ENCODE measurements at regions of chr5 and their contacts with region 1.

Region 1: DNA sequence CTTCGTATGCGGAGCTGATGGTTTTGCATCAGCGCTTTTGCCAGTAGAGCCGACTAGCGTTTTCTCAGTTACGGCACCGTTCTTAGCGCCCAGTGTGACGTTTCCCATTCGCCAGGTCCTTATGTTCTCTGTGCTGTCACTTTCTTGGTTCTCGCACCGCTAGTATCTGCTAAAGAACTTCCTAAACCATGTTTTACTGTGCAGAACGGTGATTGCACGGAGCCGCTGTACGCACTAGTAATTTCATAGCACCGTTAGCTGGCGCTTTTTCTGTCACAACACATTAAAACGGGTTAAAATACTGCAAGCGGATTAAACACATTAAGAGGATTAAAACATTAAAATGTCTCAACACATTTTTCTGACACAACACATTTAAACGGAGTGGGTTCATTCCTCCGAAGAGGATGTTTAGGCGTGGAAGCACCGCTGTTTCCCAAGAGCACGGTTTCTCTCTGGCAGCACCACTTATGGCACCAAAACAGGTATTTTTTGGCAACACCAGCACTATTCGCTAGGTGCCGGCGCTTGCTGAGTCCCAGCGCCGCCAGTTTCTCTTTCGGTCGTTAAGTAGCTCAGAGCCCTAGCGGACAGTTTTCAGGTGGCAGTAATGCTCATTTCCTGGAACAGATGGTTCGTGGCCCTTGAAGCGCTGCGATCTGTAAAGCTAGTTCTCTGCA is 20.4 kb downstream of the ANXA2R start:
- DNase-seq: peak; percentile 65 to 95 (median 86)
- ATAC-seq: peak; percentile 67 to 74 (median 70)
- H3K4me3 ChIP-seq: peak overlapping the region; percentile 70 to 92
- H3K4me3 Mint-ChIP-seq: peak overlapping the region; percentile 90 to 98 (median 98)
- H3K27ac ChIP-seq: peak overlapping the region; percentile 98
- H3K27ac Mint-ChIP-seq: peak overlapping the region; percentile 98 to 100
- H3K4me1 ChIP-seq: peaks cover 31 to 35% of the 10 kb centered on the region in 2 experiments
- H3K4me1 Mint-ChIP-seq: peaks cover 41 to 46% (median 42%) of the 10 kb centered on the region in 3 donors
- H3K27me3 ChIP-seq: no peaks in the 10 kb centered on the region
- H3K27me3 Mint-ChIP-seq: no peaks in the 10 kb centered on the region

Region 2: DNA sequence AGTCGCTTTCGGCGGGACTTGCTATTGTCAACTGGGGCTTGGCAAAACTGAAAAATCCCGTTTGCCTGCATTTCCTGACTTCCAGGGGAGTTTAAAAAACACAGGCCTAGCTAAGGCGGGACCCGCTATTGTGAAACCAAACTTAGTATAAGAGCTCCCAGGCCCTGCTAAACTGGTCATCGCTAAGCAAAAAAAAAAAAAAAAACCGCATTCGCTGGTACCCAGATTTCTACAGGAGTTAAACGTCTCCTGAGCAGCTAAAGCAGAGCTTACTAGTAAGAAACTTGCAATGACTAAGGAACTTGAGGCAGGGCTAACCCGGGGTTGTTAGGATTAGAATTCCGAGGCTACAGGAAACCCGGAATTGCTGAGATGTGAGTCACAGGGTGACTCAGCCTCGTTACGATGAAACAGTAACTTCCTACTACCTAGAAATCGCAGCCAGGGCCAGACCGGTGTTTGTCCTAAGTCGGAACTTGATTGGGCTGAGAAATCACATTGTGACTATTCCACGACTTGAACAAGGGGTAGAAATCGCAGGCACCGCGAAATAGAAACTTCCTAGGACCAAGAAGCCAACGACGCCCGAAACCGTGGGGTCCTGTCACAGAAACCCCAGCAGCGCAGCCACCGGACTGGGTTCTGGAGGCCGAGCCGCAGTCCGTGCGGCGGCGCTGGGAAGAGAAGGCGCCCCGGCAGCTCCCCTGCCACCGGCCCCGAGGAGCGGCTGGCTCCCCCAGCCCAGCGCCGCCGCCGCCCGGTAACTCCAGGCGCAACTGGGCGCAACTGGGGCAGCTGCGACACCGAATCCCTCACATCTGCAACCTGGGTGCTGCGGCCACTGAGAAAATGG is 69.1 kb before region 1 on chr5:
- CTCF ChIA-PET with region 1: interaction called, 3 to 16 read pairs
- POLR2A ChIA-PET with region 1: interaction called, 3 to 47 read pairs
- DNase-seq: peak; percentile 17 to 80 (median 41)
- ATAC-seq: peak; percentile 17 to 58 (median 44)
- H3K4me3 ChIP-seq: peak overlapping the region; percentile 77 to 98
- H3K4me3 Mint-ChIP-seq: peak overlapping the region; percentile 96 to 98 (median 98)
- H3K27ac ChIP-seq: peak overlapping the region; percentile 99
- H3K27ac Mint-ChIP-seq: peak overlapping the region; percentile 100
- H3K4me1 ChIP-seq: peaks cover 15 to 46% of the 10 kb centered on the region in 2 experiments
- H3K4me1 Mint-ChIP-seq: peaks cover 34 to 45% (median 40%) of the 10 kb centered on the region in 3 donors
- H3K27me3 ChIP-seq: no peaks in the 10 kb centered on the region
- H3K27me3 Mint-ChIP-seq: no peaks in the 10 kb centered on the region

Region 3: GRCh38 chr5:42989190-42989589 is 30.6 kb before region 1 on chr5:
- CTCF ChIA-PET with region 1: interaction called, 5 to 146 read pairs
- POLR2A ChIA-PET with region 1: interaction called, 31 to 122 read pairs
- DNase-seq: peak in 1 of 35 experiments; percentile 46
- ATAC-seq: no peak
- H3K4me3 ChIP-seq: peak overlapping the region in 1 of 2 donors; percentile 83
- H3K4me3 Mint-ChIP-seq: peak overlapping the region; percentile 83 to 100 (median 100)
- H3K27ac ChIP-seq: peak overlapping the region; percentile 89
- H3K27ac Mint-ChIP-seq: peak overlapping the region; percentile 90 to 100
- H3K4me1 ChIP-seq: peaks cover 25 to 39% of the 10 kb centered on the region in 2 experiments
- H3K4me1 Mint-ChIP-seq: peaks cover 59 to 76% (median 65%) of the 10 kb centered on the region in 3 donors
- H3K27me3 ChIP-seq: no peaks in the 10 kb centered on the region
- H3K27me3 Mint-ChIP-seq: no peaks in the 10 kb centered on the region

Region 4: GRCh38 chr5:42994246-42995151 is 25.3 kb before region 1 on chr5:
- CTCF ChIA-PET with region 1: interaction called, 5 to 146 read pairs
- POLR2A ChIA-PET with region 1: interaction called, 31 to 122 read pairs
- DNase-seq: peak; percentile 73 to 91 (median 82)
- ATAC-seq: peak; percentile 62 to 72 (median 66)
- H3K4me3 ChIP-seq: peak overlapping the region; percentile 83 to 95
- H3K4me3 Mint-ChIP-seq: peak overlapping the region; percentile 99 to 100 (median 100)
- H3K27ac ChIP-seq: peak overlapping the region; percentile 89
- H3K27ac Mint-ChIP-seq: peak overlapping the region; percentile 100
- H3K4me1 ChIP-seq: peaks cover 22 to 32% of the 10 kb centered on the region in 2 experiments
- H3K4me1 Mint-ChIP-seq: peaks cover 29 to 37% (median 35%) of the 10 kb centered on the region in 3 donors
- H3K27me3 ChIP-seq: no peaks in the 10 kb centered on the region
- H3K27me3 Mint-ChIP-seq: no peaks in the 10 kb centered on the region

Region 5: GRCh38 chr5:43008369-43009153 is 11.2 kb before region 1 on chr5:
- CTCF ChIA-PET with region 1: interaction called, 6 to 97 read pairs
- POLR2A ChIA-PET with region 1: interaction called, 46 to 128 read pairs
- DNase-seq: peak; percentile 83 to 97 (median 90)
- ATAC-seq: peak; percentile 65 to 72 (median 71)
- H3K4me3 ChIP-seq: peak overlapping the region; percentile 54 to 97
- H3K4me3 Mint-ChIP-seq: peak overlapping the region; percentile 85 to 87 (median 85)
- H3K27ac ChIP-seq: peak overlapping the region; percentile 87
- H3K27ac Mint-ChIP-seq: peak overlapping the region; percentile 96 to 99
- H3K4me1 ChIP-seq: peaks cover 22 to 34% of the 10 kb centered on the region in 2 experiments
- H3K4me1 Mint-ChIP-seq: peaks cover 40 to 51% (median 42%) of the 10 kb centered on the region in 3 donors
- H3K27me3 ChIP-seq: no peaks in the 10 kb centered on the region
- H3K27me3 Mint-ChIP-seq: no peaks in the 10 kb centered on the region

Region 6: DNA sequence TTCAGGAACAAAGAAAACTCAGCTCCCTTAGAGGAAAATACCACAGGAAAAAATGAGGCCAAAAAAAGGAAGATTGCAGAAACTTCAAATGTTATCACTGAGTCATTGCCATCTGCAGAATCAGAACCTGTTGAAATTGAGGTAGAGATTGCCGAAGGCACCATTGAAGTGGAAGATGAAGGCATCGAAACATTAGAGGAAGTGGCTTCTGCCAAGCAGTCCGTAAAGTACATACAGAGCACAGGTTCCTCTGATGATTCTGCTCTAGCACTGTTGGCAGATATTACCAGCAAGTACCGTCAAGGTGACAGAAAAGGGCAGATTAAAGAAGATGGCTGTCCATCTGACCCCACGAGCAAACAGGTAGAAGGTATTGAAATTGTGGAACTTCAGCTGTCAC is 141.5 kb after region 1 on chr5:
- CTCF ChIA-PET with region 1: no interaction called
- POLR2A ChIA-PET with region 1: no interaction called
- DNase-seq: peak in 12 of 35 experiments; percentile 2 to 39 (median 6)
- ATAC-seq: peak; percentile 69 to 94 (median 90)
- H3K4me3 ChIP-seq: no peak overlapping the region
- H3K4me3 Mint-ChIP-seq: peak overlapping the region in 1 of 3 donors; percentile 18
- H3K27ac ChIP-seq: no peak overlapping the region
- H3K27ac Mint-ChIP-seq: peak overlapping the region; percentile 55 to 76
- H3K4me1 ChIP-seq: peaks cover 0 to 3% of the 10 kb centered on the region in 2 experiments
- H3K4me1 Mint-ChIP-seq: peaks cover 22 to 32% (median 27%) of the 10 kb centered on the region in 3 donors
- H3K27me3 ChIP-seq: no peaks in the 10 kb centered on the region
- H3K27me3 Mint-ChIP-seq: no peaks in the 10 kb centered on the region

Measured in T-cell (primary cell).